Heart left ventricle (tissue), 16 donors: ENCODE measurements at regions of chr17 and their contacts with region 1.

Region 1: GRCh38 chr17:73719588-73720071 is 75.4 kb upstream of the SDK2 start:
- DNase-seq: peak; percentile 35 to 74 (median 45)
- ATAC-seq: peak; percentile 65 to 89 (median 84)
- H3K4me3 ChIP-seq: no peak overlapping the region
- H3K27ac ChIP-seq: peak overlapping the region in 2 of 12 donors; percentile 23 to 27
- H3K4me1 ChIP-seq: peaks cover 0 to 15% (median 12%) of the 10 kb centered on the region in 12 donors
- H3K27me3 ChIP-seq: peaks cover 0 to 4% (median 0%) of the 10 kb centered on the region in 9 donors
- CTCF ChIP-seq: no peak
- POLR2A ChIP-seq: no peak

Region 2: DNA sequence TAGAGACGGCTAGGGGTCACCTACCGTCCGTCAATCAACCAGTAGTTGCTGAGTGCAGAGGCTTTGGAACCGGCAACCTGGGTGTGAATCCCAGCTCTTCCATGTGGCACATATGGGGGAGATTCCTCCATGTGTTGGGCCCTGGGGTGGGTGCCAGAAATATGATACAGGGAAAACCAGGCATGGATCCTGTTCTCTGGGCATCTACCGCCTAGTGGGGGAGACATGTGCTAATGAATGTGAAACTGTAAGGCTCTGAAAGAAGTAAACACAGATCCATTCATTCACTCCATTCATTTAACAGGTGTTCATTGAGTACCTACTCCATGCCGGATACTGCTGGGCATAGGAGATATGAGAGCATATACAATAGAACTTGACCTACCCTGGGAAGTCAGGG is 35.9 kb before region 1 on chr17:
- intact Hi-C with region 1: no loop called
- DNase-seq: no peak
- ATAC-seq: no peak
- H3K4me3 ChIP-seq: no peak overlapping the region
- H3K27ac ChIP-seq: no peak overlapping the region
- H3K4me1 ChIP-seq: no peaks in the 10 kb centered on the region
- H3K27me3 ChIP-seq: peaks cover 0 to 9% (median 0%) of the 10 kb centered on the region in 9 donors
- CTCF ChIP-seq: no peak
- POLR2A ChIP-seq: no peak

Region 3: DNA sequence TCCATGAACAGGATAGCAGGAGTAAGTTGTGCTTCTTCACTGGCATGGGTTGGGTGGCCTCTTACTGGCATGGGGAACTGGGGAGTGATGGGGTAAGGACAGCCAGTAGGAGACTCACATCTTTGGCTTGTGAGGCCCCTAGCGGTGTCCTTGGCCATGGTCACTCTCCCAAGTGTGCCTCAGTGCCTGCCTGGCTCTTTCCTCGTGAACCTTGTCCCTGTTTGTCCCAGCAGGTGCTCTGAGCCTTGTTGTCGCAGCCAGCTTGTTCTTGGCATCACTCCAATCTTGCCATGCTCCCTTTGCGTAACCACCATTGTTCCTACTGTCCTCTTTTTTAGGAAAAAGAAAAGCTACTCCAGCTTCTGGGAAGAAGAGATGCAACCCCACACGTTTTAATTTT is 21.8 kb before region 1 on chr17:
- intact Hi-C with region 1: no loop called
- DNase-seq: no peak
- ATAC-seq: no peak
- H3K4me3 ChIP-seq: no peak overlapping the region
- H3K27ac ChIP-seq: no peak overlapping the region
- H3K4me1 ChIP-seq: no peaks in the 10 kb centered on the region
- H3K27me3 ChIP-seq: peaks cover 0 to 5% (median 0%) of the 10 kb centered on the region in 9 donors
- CTCF ChIP-seq: peak in 1 of 12 donors; percentile 6
- POLR2A ChIP-seq: no peak

Region 4: GRCh38 chr17:73833775-73834488 is 114.3 kb after region 1 on chr17:
- intact Hi-C with region 1: loop called in 2 of 10 experiments (anchors 10 kb)
- DNase-seq: no peak
- ATAC-seq: no peak
- H3K4me3 ChIP-seq: no peak overlapping the region
- H3K27ac ChIP-seq: no peak overlapping the region
- H3K4me1 ChIP-seq: no peaks in the 10 kb centered on the region
- H3K27me3 ChIP-seq: peaks cover 0 to 46% (median 10%) of the 10 kb centered on the region in 9 donors
- CTCF ChIP-seq: no peak
- POLR2A ChIP-seq: no peak

Region 5: GRCh38 chr17:73924501-73925186 is 205.0 kb after region 1 on chr17:
- intact Hi-C with region 1: no loop called
- DNase-seq: no peak
- ATAC-seq: no peak
- H3K4me3 ChIP-seq: no peak overlapping the region
- H3K27ac ChIP-seq: no peak overlapping the region
- H3K4me1 ChIP-seq: no peaks in the 10 kb centered on the region
- H3K27me3 ChIP-seq: peaks cover 0 to 6% (median 0%) of the 10 kb centered on the region in 9 donors
- CTCF ChIP-seq: no peak
- POLR2A ChIP-seq: no peak